H1 (cell line): ENCODE measurements at regions of chr6 and their contacts with region 1.

Region 1: GRCh38 chr6:56595490-56596122 is 47.1 kb downstream of the DST start:
- DNase-seq: peak in 1 of 2 experiments; percentile 52
- H3K4me3 ChIP-seq: no peak overlapping the region
- H3K27ac ChIP-seq: no peak overlapping the region
- H3K4me1 ChIP-seq: no peaks in the 10 kb centered on the region
- H3K27me3 ChIP-seq: no peaks in the 10 kb centered on the region
- CTCF ChIP-seq: peak in 2 of 3 experiments; percentile 42 to 62; a peak in 2 of 4 replicates
- EP300 ChIP-seq: no peak
- POLR2A ChIP-seq: no peak
- RAD21 ChIP-seq: peak; percentile 31 to 43; a peak in 3 of 4 replicates

Region 2: GRCh38 chr6:56359201-56359899 is 236.3 kb before region 1 on chr6:
- CTCF ChIA-PET with region 1: interaction called, 36 read pairs
- POLR2A ChIA-PET with region 1: no interaction called
- DNase-seq: peak in 1 of 2 experiments; percentile 73
- H3K4me3 ChIP-seq: no peak overlapping the region
- H3K27ac ChIP-seq: no peak overlapping the region
- H3K4me1 ChIP-seq: no peaks in the 10 kb centered on the region
- H3K27me3 ChIP-seq: no peaks in the 10 kb centered on the region
- CTCF ChIP-seq: peak in 2 of 3 experiments; percentile 74 to 76; a peak in 3 of 4 replicates
- EP300 ChIP-seq: no peak
- POLR2A ChIP-seq: no peak
- RAD21 ChIP-seq: peak; percentile 94 to 95

Region 3: DNA sequence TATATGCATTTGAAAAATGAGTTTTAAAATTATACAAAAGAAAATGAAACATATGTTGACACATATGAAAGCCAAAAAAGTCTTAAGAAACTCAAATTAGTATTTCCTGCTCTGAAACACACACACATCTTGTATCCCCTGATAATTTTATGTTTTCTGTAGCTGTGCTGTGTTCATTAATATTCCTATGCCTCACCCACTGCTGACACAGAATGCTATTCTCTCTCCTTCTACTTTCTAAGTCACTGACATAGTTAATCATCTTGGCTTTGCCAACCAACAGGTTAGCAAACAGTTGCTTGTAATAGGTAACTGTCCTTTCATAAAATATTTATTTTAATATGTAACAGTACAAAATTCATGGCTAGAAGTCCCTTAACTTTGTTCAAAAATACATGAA is 93.6 kb before region 1 on chr6:
- CTCF ChIA-PET with region 1: no interaction called
- POLR2A ChIA-PET with region 1: no interaction called
- DNase-seq: no peak
- H3K4me3 ChIP-seq: no peak overlapping the region
- H3K27ac ChIP-seq: no peak overlapping the region
- H3K4me1 ChIP-seq: no peaks in the 10 kb centered on the region
- H3K27me3 ChIP-seq: no peaks in the 10 kb centered on the region
- CTCF ChIP-seq: no peak
- EP300 ChIP-seq: no peak
- POLR2A ChIP-seq: no peak
- RAD21 ChIP-seq: no peak

Region 4: GRCh38 chr6:56570413-56571359 is 24.9 kb before region 1 on chr6:
- CTCF ChIA-PET with region 1: interaction called, 48 read pairs
- POLR2A ChIA-PET with region 1: no interaction called
- DNase-seq: no peak
- H3K4me3 ChIP-seq: no peak overlapping the region
- H3K27ac ChIP-seq: no peak overlapping the region
- H3K4me1 ChIP-seq: no peaks in the 10 kb centered on the region
- H3K27me3 ChIP-seq: no peaks in the 10 kb centered on the region
- CTCF ChIP-seq: peak in 1 of 3 experiments; percentile 47; a peak in 2 of 4 replicates
- EP300 ChIP-seq: no peak
- POLR2A ChIP-seq: no peak
- RAD21 ChIP-seq: peak; percentile 35 to 39

Region 5: DNA sequence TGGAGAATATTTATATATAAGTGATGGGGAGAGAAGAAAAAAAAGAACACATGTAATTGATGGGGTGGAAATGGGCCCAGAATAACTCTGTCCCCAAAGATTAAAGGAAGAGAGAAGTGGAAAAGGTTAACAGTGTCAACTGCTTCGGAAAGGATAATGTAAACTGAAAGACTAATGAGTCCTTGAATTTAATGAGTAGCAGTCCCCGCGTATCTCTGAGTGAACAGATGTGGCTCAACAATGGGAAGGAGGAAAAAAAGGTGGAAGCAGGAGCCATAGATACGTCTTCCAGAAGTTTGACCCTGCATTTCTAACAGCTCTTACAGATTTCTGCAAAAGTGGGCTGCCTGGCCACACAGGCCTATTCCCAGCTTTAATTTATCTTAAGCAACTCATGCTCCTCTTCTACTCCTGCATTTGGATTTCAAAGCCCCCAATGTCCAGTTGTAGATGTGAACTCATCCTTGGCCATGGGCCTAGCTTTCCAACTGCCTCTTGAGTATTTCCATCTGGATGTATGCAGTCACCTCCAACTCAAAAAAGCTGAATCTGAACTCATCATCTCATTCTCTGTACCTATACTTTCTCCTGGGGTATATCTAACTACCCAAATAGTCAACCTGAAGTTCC is 14.2 kb before region 1 on chr6:
- CTCF ChIA-PET with region 1: interaction called, 23 read pairs
- POLR2A ChIA-PET with region 1: no interaction called
- DNase-seq: no peak
- H3K4me3 ChIP-seq: no peak overlapping the region
- H3K27ac ChIP-seq: no peak overlapping the region
- H3K4me1 ChIP-seq: no peaks in the 10 kb centered on the region
- H3K27me3 ChIP-seq: no peaks in the 10 kb centered on the region
- CTCF ChIP-seq: no peak
- EP300 ChIP-seq: no peak
- POLR2A ChIP-seq: no peak
- RAD21 ChIP-seq: no peak

Region 6: GRCh38 chr6:56613247-56613851 is 17.7 kb after region 1 on chr6:
- CTCF ChIA-PET with region 1: interaction called, 31 read pairs
- POLR2A ChIA-PET with region 1: no interaction called
- DNase-seq: no peak
- H3K4me3 ChIP-seq: no peak overlapping the region
- H3K27ac ChIP-seq: no peak overlapping the region
- H3K4me1 ChIP-seq: no peaks in the 10 kb centered on the region; a peak in 1 of 7 replicates
- H3K27me3 ChIP-seq: no peaks in the 10 kb centered on the region
- CTCF ChIP-seq: no peak
- EP300 ChIP-seq: no peak
- POLR2A ChIP-seq: no peak
- RAD21 ChIP-seq: no peak

Region 7: GRCh38 chr6:56637640-56638039 is 42.0 kb after region 1 on chr6:
- CTCF ChIA-PET with region 1: no interaction called
- POLR2A ChIA-PET with region 1: no interaction called
- DNase-seq: no peak
- H3K4me3 ChIP-seq: no peak overlapping the region
- H3K27ac ChIP-seq: no peak overlapping the region
- H3K4me1 ChIP-seq: no peaks in the 10 kb centered on the region
- H3K27me3 ChIP-seq: no peaks in the 10 kb centered on the region
- CTCF ChIP-seq: peak in 2 of 3 experiments; percentile 49 to 56; a peak in 2 of 4 replicates
- EP300 ChIP-seq: no peak
- POLR2A ChIP-seq: no peak
- RAD21 ChIP-seq: peak; percentile 68 to 72

Region 8: DNA sequence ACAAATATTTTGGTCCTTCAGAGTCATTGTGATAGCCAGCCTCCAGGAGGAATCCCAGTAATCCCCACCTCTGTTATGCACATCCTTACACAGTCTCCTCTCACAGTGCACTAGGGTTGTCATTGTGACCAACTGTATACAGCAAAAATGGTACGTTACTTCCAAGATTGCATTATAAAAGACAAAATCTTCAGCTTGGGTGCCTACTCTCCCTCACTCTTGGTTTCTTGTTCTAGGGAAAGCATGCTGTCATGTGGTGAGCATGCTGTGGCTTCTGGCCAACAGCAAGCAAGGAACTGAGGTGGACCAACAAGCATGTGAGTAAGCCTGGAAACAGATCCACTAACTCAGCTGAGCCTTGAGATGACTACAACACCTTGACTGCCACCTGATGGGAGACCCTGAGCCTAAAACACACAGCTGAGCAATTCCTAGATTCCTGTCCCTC is 177.2 kb after region 1 on chr6:
- CTCF ChIA-PET with region 1: no interaction called
- POLR2A ChIA-PET with region 1: no interaction called
- DNase-seq: no peak
- H3K4me3 ChIP-seq: no peak overlapping the region
- H3K27ac ChIP-seq: no peak overlapping the region
- H3K4me1 ChIP-seq: peaks cover 3 to 14% (median 12%) of the 10 kb centered on the region in 4 experiments; a peak in 6 of 7 replicates
- H3K27me3 ChIP-seq: no peaks in the 10 kb centered on the region
- CTCF ChIP-seq: peak in 1 of 3 experiments; percentile 9; a peak in 1 of 4 replicates
- EP300 ChIP-seq: no peak
- POLR2A ChIP-seq: no peak
- RAD21 ChIP-seq: peak; percentile 7 to 37; a peak in 1 of 4 replicates